ENCODE measurements at regions of chr15 and their contacts with region 1.

Region 1: DNA sequence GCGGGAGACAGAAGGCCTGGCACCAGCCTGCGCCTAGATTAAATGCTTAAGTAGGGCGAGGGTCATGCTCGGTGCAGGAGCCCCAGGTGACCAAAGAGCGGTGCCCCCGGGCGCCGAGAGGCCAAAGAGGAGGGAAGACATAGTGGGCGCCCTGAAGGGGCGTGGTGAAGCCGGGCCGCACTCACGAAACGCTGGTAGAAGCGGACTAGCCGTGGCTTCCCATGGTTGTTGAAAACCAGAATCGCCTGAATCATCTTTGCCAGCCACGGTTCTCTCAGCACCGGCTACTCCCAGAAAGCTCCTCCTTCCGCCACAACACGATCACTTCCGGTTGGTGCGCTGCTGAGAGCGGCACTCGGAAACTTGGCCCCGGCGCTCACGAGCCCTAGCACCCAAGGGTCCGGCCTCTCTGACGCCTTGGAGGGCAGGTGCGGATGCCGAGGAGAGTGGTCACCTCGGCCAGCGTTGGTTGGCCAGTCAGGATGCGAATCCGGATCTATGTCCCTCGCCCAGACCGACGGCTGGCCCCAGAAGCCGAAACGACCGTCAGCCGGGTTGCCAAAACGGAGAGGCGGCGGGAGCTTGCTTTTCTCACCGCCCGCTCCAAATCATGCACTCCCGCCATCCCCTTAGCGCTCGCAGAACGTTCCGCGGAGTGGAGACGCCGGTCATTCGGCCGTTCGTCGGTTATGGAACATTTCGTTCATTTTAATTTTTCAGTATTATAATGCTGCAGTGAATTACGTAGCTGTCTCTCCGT is at the start of gene AP3S2:
- DNase-seq: peak; percentile 91 to 98
- ATAC-seq: peak; percentile 95 to 97
- H3K4me3 ChIP-seq: peak within 1 kb of the TSS; percentile 87
- H3K27ac ChIP-seq: peak within 1 kb of the TSS; percentile 89 to 92
- H3K4me1 ChIP-seq: peaks cover 14% of the 10 kb centered on the region; the same call in 2 of the 3 replicates
- CTCF ChIP-seq: no peak
- EP300 ChIP-seq: no peak; a peak in 1 of 5 replicates
- POLR2A ChIP-seq: peak; percentile 81
- RAD21 ChIP-seq: peak; percentile 6 to 46; a peak in 3 of 5 replicates
- polyA plus RNA-seq, gene AP3S2: 56.7 and 85.9 TPM in 2 replicates

Region 2: DNA sequence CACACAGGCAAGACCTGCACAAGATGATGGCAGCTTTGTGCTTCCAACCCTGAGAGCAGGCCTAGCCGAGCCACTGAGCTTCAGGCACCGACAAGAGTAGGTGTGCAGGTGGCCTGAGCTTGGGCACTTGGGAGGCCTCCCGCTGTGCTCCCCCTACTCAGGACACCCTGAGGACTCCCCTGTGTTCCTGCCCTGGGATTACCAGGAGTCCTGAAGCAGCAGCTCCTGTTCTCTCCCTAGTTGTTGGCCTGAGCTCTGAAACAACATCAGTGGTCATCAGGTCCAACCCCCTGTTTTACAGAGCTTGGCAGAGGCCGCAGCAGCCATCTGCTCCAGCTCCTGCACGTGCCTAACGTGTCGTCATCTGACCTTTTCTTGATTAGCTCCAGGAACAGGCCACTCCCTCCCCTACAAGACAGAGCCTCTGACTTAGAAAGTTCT is 125.8 kb before region 1 on chr15:
- CTCF ChIA-PET with region 1: interaction called, 239 read pairs
- POLR2A ChIA-PET with region 1: no interaction called
- DNase-seq: no peak
- ATAC-seq: peak in 1 of 2 experiments; percentile 17; a peak in 3 of 6 replicates
- H3K4me3 ChIP-seq: no peak overlapping the region
- H3K27ac ChIP-seq: peak overlapping the region in 1 of 2 experiments; percentile 42; a peak in 1 of 6 replicates
- H3K4me1 ChIP-seq: peaks cover 14% of the 10 kb centered on the region
- CTCF ChIP-seq: no peak
- EP300 ChIP-seq: no peak
- POLR2A ChIP-seq: no peak
- RAD21 ChIP-seq: no peak

Region 3: DNA sequence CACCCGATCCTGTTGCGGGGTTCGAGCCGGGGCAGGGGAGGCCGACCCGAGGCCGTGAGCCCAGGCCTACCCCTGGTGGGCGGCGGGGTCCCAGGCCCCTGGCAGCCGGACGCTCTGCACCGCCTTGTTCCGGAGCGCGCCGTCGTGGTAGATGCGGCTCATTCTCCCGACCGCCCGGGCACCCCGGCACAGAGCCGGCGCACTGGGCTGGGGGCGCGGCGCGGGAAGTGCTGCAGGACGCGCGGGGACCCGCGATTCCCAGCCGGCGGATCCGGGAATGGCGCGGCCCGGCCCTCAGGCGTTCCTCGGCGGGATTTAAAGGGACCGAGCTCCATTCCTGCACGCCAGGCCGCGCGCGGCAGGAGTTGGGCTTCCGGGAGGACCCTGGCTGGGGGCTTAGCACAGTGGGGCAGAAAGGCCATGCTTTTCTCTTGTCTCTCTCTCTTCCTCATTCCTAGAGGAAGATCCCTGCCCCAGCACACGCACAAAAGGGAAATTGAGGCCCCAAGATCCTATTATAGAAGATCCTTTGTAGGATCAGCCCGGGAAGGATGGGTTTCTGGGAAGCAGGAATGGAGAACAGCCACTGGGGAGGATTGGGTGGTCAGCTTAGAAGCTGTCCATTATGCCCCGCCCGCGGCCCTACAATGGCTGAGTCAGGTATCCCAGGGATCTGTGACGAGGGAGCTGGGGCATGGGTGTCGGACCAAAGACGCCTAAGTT is 19.0 kb after region 1 on chr15 and contains the start of gene ARPIN:
- CTCF ChIA-PET with region 1: interaction called, 54 read pairs
- POLR2A ChIA-PET with region 1: interaction called, 10 read pairs
- DNase-seq: peak; percentile 63 to 77
- ATAC-seq: peak; percentile 81 to 90
- H3K4me3 ChIP-seq: peak within 1 kb of the TSS; percentile 68
- H3K27ac ChIP-seq: peak within 1 kb of the TSS; percentile 78 to 97
- H3K4me1 ChIP-seq: peaks cover 28% of the 10 kb centered on the region
- CTCF ChIP-seq: no peak
- EP300 ChIP-seq: no peak
- POLR2A ChIP-seq: peak; percentile 59
- RAD21 ChIP-seq: no peak
- polyA plus RNA-seq, gene ARPIN: 19.4 and 20.3 TPM in 2 replicates

Region 4: DNA sequence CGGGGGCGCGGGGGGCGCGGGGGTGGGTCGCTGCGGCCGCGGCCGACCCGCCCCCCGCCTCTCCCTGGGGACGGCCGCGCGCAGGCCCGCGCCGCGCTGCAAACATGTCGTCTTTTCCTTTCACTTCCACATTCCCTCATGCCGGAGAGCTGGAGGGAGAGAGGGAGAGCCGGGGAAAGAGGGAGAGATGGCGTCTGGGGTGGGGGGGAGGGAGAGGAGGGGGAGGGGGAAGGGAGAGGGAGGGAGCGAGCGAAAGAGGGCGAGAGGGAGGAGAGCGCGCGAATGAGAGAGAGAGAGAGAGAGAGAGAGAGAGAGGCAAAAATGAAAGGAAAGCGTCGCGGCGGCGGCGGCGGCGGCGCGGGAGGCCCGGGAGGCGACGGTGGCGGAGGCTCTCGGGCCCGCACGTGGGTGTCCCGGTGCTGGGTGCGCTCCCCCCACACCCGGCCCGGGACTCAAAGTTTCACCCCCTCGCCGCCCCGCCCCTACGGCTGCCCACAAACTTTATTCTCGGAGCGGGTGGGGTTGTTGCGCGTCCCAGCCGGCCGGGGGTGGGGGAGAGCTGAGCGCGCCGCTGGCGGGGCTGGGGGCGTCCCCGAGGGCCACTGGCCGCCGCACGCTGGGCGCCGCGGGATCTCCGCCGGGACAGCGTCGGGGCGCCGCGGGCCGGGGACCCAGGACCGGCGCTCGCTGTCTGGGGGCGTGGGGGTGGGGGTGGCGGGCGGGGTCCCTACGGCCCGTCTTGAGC is 108.0 kb after region 1 on chr15:
- CTCF ChIA-PET with region 1: interaction called, 10 read pairs
- POLR2A ChIA-PET with region 1: interaction called, 3 read pairs
- DNase-seq: peak; percentile 67 to 75
- ATAC-seq: peak; percentile 11 to 37
- H3K4me3 ChIP-seq: peak overlapping the region; percentile 85
- H3K27ac ChIP-seq: peak overlapping the region; percentile 93 to 97
- H3K4me1 ChIP-seq: peaks cover 66% of the 10 kb centered on the region
- CTCF ChIP-seq: no peak
- EP300 ChIP-seq: no peak
- POLR2A ChIP-seq: no peak
- RAD21 ChIP-seq: no peak

Region 5: DNA sequence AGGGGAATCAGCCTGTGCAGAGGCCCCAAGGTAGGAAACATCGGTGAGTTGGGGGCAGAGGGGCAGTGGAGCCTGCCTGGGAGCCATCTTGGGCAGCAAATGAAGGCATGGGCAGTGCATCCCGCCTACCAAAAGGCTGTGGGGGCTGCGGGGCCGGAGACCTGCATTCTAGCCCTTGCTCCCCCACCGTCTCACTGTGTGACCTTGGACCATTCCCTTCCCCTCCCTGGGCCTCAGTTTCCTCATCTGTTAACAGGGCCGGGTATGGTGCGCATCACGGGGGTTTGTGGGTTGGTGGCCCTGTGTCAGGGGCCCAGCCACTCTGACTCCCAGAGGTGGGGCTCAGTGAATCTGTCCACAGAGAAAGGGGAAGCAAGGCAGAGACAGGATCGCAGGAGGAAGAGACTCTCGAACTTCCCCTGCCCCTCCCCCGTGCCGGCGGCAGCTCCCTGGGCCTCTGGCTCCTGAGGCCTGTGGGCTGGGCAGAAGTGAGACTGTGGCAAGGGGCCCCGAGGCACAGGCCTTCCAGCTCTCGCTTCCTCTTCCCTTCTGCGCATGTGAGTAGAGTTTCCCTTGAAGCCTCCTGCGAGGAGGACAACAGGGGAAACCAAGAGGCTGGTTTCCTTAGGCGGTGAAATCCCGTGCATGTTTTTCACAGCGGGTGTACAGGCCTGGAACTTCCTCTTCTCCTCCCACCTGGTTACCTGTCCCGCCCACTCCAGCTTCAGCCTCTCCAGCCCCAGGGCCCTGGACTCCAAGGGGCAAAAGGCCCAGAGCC is 165.5 kb after region 1 on chr15:
- CTCF ChIA-PET with region 1: interaction called, 11 read pairs
- POLR2A ChIA-PET with region 1: interaction called, 3 read pairs
- DNase-seq: no peak
- ATAC-seq: no peak
- H3K4me3 ChIP-seq: no peak overlapping the region
- H3K27ac ChIP-seq: no peak overlapping the region
- H3K4me1 ChIP-seq: peaks cover 7% of the 10 kb centered on the region
- CTCF ChIP-seq: no peak
- EP300 ChIP-seq: no peak
- POLR2A ChIP-seq: no peak
- RAD21 ChIP-seq: no peak

Region 6: DNA sequence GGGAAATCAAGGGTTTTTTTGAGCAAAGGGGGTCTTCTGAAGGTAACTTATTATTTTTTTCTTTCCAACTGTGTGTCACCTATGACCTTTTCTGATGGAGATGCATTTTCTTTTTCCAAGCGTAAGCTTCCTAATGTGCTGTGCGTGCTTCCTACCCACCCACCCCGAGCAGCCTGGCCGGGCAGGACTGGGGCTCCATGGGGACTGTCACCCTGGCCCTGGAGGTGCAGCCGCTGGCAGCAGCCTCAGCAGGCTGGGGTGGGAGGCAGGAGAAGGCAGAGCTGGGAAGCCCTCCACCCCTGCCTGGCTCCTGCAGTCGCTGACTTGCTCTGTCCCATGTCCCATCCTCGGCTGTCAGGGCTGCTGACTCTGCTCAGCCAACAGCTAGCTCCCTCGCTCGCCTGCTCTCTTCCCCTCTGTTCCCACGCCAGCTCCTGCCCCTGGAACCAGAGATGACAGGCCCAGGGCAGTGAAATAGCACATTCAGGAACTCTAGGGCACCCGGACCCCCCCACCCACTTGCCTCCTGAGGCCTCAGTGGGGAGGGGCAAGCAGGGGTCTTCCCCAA is 187.0 kb after region 1 on chr15:
- CTCF ChIA-PET with region 1: interaction called, 94 read pairs
- POLR2A ChIA-PET with region 1: interaction called, 5 read pairs
- DNase-seq: no peak
- ATAC-seq: no peak; a peak in 1 of 6 replicates
- H3K4me3 ChIP-seq: no peak overlapping the region
- H3K27ac ChIP-seq: no peak overlapping the region
- H3K4me1 ChIP-seq: no peaks in the 10 kb centered on the region
- CTCF ChIP-seq: no peak
- EP300 ChIP-seq: no peak
- POLR2A ChIP-seq: no peak
- RAD21 ChIP-seq: no peak

Region 7: GRCh38 chr15:90086868-90087268 is 193.0 kb after region 1 on chr15:
- CTCF ChIA-PET with region 1: interaction called, 94 read pairs
- POLR2A ChIA-PET with region 1: interaction called, 8 read pairs
- DNase-seq: peak; percentile 68 to 79
- ATAC-seq: peak; percentile 74 to 84; a peak in 5 of 6 replicates
- H3K4me3 ChIP-seq: no peak overlapping the region
- H3K27ac ChIP-seq: 0 out of 6 replicates have a peak overlapping the region, but pooled peaks of 1 of the 2 experiments have one; percentile 13
- H3K4me1 ChIP-seq: peaks cover 7% of the 10 kb centered on the region; the same call in 1 of the 3 replicates
- CTCF ChIP-seq: peak; percentile 79
- EP300 ChIP-seq: no peak
- POLR2A ChIP-seq: no peak
- RAD21 ChIP-seq: peak; percentile 79 to 94

Measured in A549 (cell line).